Activated CD4-positive, alpha-beta T cell treated with anti-CD3 and anti-CD28 coated beads, Interleukin-2, amount 10 ng/mL, durations not matched to agents 7 days and 5 days (primary cell): ENCODE measurements at regions of chr17 and their contacts with region 1.

Region 1: DNA sequence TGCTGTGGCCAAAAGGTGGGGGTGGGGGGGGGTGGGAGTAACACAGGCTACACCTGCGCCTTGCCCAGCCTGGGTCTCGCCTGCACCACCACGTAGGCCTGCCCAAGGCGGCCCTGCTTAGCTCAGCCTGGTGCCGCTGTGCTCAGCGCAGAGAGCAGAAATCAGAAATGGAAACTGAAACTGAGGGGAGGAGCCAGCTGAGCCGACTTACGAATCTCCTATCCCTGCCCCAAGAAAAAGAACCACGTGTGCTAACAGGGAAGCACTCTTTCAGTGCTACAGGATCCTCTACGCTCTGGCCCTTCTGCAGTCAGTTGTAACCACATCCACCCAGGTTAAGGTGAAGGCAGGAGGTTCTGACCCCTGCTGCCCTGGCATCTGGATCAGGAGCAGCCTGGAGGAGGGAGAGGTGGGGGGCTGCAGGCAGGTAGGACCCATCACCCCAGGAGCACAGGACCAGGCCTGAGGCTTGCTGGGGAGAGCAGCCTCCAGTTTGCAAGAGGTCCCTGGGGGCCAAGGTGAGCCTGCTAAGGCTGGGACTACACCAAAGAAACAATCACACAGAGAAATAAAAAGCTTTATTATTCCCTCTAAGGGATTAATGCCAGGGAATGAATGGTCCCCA is at the start of gene DHX58:
- DNase-seq: peak; percentile 90
- H3K4me3 Mint-ChIP-seq: peak within 1 kb of the TSS; percentile 80
- H3K27ac Mint-ChIP-seq: peak within 1 kb of the TSS; percentile 97
- H3K4me1 Mint-ChIP-seq: peaks cover 71% of the 10 kb centered on the region
- H3K27me3 Mint-ChIP-seq: no peaks in the 10 kb centered on the region
- total RNA-seq, gene DHX58: 52.4 to 54.3 TPM

Region 2: DNA sequence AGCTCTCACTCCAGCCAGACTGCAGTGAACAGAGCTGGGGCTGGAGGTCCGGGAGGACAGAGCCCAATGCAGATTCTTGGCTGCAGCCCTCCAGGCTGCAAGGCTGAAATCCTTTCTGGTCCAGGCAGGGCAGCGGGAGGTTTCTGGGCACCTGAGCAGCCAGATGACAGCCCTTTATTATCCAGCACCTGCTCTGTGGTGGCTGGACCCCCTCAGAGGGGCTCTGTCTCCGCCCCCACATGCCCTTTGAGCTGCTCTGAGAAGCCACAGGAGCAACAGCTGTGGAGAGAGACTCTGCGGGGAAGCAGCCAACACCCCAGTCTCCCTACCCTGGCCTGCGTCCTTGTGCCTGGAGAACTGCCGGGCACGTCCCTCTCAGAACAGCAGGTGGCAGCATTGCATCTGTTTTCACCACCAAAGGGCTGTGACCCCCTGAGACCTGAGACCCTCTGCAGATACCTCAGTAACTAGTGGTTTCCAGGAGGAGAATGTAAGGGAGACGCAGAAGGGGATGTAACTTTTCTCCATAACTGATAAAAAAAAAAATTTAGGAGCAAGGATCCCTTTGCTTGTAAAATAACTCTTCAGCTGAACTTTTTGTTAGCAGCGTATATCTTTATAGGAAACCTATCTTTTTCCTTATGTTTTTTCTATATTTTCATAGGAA is 149.8 kb before region 1 on chr17:
- CTCF ChIA-PET with region 1: interaction called, 14 read pairs
- POLR2A ChIA-PET with region 1: interaction called, 7 read pairs
- DNase-seq: peak; percentile 82
- H3K4me3 Mint-ChIP-seq: no peak overlapping the region
- H3K27ac Mint-ChIP-seq: no peak overlapping the region
- H3K4me1 Mint-ChIP-seq: peaks cover 23% of the 10 kb centered on the region
- H3K27me3 Mint-ChIP-seq: peaks cover 4% of the 10 kb centered on the region

Region 3: GRCh38 chr17:42019509-42020404 is 92.9 kb before region 1 on chr17 and contains the start of gene NKIRAS2:
- CTCF ChIA-PET with region 1: interaction called, 71 read pairs
- POLR2A ChIA-PET with region 1: interaction called, 6 read pairs
- DNase-seq: peak; percentile 95
- H3K4me3 Mint-ChIP-seq: peak within 1 kb of the TSS; percentile 99
- H3K27ac Mint-ChIP-seq: peak within 1 kb of the TSS; percentile 90
- H3K4me1 Mint-ChIP-seq: peaks cover 63% of the 10 kb centered on the region
- H3K27me3 Mint-ChIP-seq: no peaks in the 10 kb centered on the region
- total RNA-seq, gene NKIRAS2: 23.3 to 25.5 TPM

Region 4: DNA sequence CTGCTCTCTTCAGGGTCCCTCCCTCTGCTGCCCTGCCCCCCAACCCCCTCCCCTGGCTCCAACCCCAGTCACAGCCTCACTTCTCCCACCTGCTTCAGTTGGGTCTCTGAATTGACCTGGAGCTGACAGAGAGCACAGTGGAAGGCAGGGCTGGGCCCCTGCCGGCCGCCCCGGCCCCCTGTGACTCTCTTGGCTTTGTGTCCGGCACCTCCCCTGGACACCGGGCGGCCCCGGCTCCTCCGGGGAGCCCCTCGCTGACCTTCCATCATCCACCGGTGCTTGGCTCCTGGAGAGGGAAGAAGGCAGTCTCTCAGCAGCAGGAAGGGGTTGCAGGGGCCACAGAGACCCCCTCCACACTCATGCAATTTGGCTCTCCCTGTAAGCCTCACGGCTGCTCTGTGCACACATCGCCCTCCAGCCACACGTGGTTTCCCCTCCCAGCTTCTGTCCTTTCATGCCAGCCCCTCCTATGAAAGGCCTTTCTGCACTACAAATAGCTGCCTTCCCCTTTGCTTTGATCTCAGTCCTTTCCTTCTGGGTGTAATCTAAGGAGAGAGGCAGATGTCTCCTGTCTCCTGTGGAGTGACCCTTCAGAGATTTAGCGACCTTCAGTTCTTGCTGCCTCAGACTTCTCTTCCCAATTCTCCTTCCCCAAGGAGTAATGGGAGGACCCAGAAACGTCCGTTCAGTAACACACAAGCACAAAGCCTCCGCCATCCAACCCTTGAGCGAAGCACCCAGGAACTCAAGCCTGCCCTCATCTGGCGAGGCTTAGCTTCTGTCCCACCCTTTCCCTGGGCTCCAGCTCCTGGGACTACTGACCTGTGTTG is 84.5 kb before region 1 on chr17:
- CTCF ChIA-PET with region 1: interaction called, 20 read pairs
- POLR2A ChIA-PET with region 1: interaction called, 6 read pairs
- DNase-seq: no peak
- H3K4me3 Mint-ChIP-seq: no peak overlapping the region
- H3K27ac Mint-ChIP-seq: peak overlapping the region; percentile 5
- H3K4me1 Mint-ChIP-seq: peaks cover 12% of the 10 kb centered on the region
- H3K27me3 Mint-ChIP-seq: peaks cover 2% of the 10 kb centered on the region

Region 5: DNA sequence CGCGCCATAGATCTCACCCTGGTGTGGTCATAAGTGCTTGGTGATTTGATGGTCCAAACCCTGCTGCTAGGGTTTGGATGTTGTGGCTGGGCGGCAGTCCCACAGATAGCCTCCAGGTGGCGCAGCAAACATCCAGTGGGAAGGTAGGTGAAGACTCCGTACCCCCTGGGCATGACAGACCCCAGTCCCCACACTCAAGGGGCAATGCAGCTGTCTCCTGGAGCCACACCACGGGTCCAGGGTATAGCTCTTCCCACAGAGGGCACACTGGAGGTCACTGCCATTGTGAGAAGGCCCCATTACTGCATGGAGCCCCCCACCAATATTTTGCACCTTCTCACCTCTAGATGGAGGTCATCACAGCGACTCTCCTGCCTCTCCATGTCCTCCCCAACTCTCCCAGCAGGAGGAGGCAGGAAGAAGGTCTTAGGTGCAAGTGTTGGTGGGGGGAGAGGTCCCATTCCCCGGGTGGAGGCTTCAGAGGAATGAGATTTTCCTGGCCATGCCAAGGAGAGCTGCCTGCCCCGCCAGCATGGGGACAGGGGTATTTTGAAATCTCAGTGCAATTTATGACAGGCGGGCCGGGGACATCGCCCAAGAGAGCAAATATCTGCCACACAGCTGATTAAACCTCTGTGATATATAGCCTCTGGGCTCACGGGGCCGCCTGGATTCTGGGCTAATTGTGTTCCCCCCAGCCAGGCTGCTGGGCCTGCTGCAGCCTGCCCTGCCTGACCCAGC is 45.1 kb before region 1 on chr17:
- CTCF ChIA-PET with region 1: interaction called, 12 read pairs
- POLR2A ChIA-PET with region 1: no interaction called
- DNase-seq: peak; percentile 74
- H3K4me3 Mint-ChIP-seq: no peak overlapping the region
- H3K27ac Mint-ChIP-seq: no peak overlapping the region
- H3K4me1 Mint-ChIP-seq: peaks cover 36% of the 10 kb centered on the region
- H3K27me3 Mint-ChIP-seq: peaks cover 12% of the 10 kb centered on the region